CD14-positive monocyte (primary cell): ENCODE measurements at regions of chrX and their contacts with region 1.

Region 1: GRCh38 chrX:120308959-120309872 is 2.0 kb downstream of the TMEM255A start:
- DNase-seq: peak; percentile 42 to 56 (median 54)
- H3K4me3 ChIP-seq: peak overlapping the region; percentile 33 to 71 (median 49)
- H3K4me3 Mint-ChIP-seq: peak overlapping the region; percentile 88 to 100
- H3K27ac ChIP-seq: no peak overlapping the region
- H3K27ac Mint-ChIP-seq: peak overlapping the region in 4 of 7 donors; percentile 0 to 72 (median 20)
- H3K4me1 ChIP-seq: peaks cover 52 to 59% of the 10 kb centered on the region in 2 donors
- H3K4me1 Mint-ChIP-seq: peaks cover 54% of the 10 kb centered on the region
- H3K27me3 ChIP-seq: peaks cover 20 to 53% of the 10 kb centered on the region in 2 donors
- H3K27me3 Mint-ChIP-seq: peaks cover 39 to 56% (median 55%) of the 10 kb centered on the region in 3 donors
- CTCF ChIP-seq: peak; percentile 26

Region 2: GRCh38 chrX:119833905-119834304 is 475.3 kb before region 1 on chrX:
- intact Hi-C with region 1: no loop called
- DNase-seq: no peak
- H3K4me3 ChIP-seq: no peak overlapping the region
- H3K4me3 Mint-ChIP-seq: no peak overlapping the region
- H3K27ac ChIP-seq: no peak overlapping the region
- H3K27ac Mint-ChIP-seq: no peak overlapping the region
- H3K4me1 ChIP-seq: no peaks in the 10 kb centered on the region
- H3K4me1 Mint-ChIP-seq: no peaks in the 10 kb centered on the region
- H3K27me3 ChIP-seq: no peaks in the 10 kb centered on the region
- H3K27me3 Mint-ChIP-seq: peaks cover 0 to 5% (median 3%) of the 10 kb centered on the region in 3 donors
- CTCF ChIP-seq: no peak

Region 3: GRCh38 chrX:120250522-120251271 is 58.5 kb before region 1 on chrX and contains the start of gene ZBTB33:
- intact Hi-C with region 1: loop called (anchors 5 kb)
- DNase-seq: peak; percentile 83 to 87 (median 83)
- H3K4me3 ChIP-seq: peak within 1 kb of the TSS; percentile 55 to 77 (median 76)
- H3K4me3 Mint-ChIP-seq: peak within 1 kb of the TSS; percentile 93 to 96
- H3K27ac ChIP-seq: peak within 1 kb of the TSS; percentile 85 to 96
- H3K27ac Mint-ChIP-seq: peak within 1 kb of the TSS; percentile 92 to 98 (median 96)
- H3K4me1 ChIP-seq: peaks cover 0 to 5% of the 10 kb centered on the region in 2 donors
- H3K4me1 Mint-ChIP-seq: peaks cover 14% of the 10 kb centered on the region
- H3K27me3 ChIP-seq: peaks cover 0 to under 1% of the 10 kb centered on the region in 2 donors
- H3K27me3 Mint-ChIP-seq: peaks cover 0 to 10% (median 0%) of the 10 kb centered on the region in 3 donors
- CTCF ChIP-seq: peak; percentile 64
- polyA plus RNA-seq, gene ZBTB33: 4.7 to 10.6 (median 8.6) TPM

Region 4: GRCh38 chrX:120402369-120402768 is 93.2 kb after region 1 on chrX:
- intact Hi-C with region 1: no loop called
- DNase-seq: no peak
- H3K4me3 ChIP-seq: no peak overlapping the region
- H3K4me3 Mint-ChIP-seq: no peak overlapping the region
- H3K27ac ChIP-seq: no peak overlapping the region
- H3K27ac Mint-ChIP-seq: no peak overlapping the region
- H3K4me1 ChIP-seq: no peaks in the 10 kb centered on the region
- H3K4me1 Mint-ChIP-seq: no peaks in the 10 kb centered on the region
- H3K27me3 ChIP-seq: peaks cover 0 to 2% of the 10 kb centered on the region in 2 donors
- H3K27me3 Mint-ChIP-seq: peaks cover 0 to 2% (median 1%) of the 10 kb centered on the region in 3 donors
- CTCF ChIP-seq: no peak

Region 5: DNA sequence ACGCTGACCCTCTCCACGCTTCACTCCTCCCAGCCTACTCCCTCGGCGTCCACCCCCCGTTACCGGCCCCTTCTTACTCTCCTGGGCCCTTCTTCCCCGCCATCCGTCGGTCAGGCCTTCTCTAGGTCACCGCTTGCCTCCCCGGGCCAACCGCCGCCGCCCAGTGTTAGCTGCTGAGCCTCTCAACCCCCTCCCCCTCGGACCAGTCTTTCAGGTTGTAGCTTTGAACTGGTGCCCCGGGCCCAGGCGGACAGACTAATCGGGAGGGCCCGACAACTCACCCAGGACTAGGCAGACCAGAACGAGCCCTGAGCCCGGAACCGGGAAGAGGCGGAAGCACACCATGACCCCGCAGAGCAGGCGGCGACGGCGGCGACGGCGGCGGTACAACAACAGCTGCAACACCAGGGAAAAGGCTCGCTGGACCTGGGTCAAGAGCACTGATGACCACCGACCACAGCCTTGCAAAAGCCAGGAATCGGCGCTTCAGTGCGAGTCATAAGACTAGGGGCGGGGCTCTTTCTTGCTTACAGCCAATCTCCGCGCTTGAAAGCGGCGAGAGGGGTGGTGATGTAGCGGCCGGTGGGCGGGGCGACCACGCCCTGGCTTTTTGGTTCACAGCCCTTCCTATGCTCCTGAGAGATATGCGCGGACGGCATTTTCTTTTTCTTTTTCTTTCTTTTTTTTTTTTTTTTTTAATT is 159.8 kb after region 1 on chrX and contains the start of gene LAMP2:
- intact Hi-C with region 1: loop called in 1 of 2 experiments (anchors 10 kb)
- DNase-seq: peak; percentile 87 to 90 (median 90)
- H3K4me3 ChIP-seq: peak within 1 kb of the TSS; percentile 47 to 89 (median 88)
- H3K4me3 Mint-ChIP-seq: peak within 1 kb of the TSS; percentile 95 to 97
- H3K27ac ChIP-seq: peak within 1 kb of the TSS; percentile 91 to 97
- H3K27ac Mint-ChIP-seq: peak within 1 kb of the TSS; percentile 93 to 99 (median 95)
- H3K4me1 ChIP-seq: peaks cover 30 to 34% of the 10 kb centered on the region in 2 donors
- H3K4me1 Mint-ChIP-seq: peaks cover 32% of the 10 kb centered on the region
- H3K27me3 ChIP-seq: no peaks in the 10 kb centered on the region
- H3K27me3 Mint-ChIP-seq: peaks cover 0 to 6% (median 0%) of the 10 kb centered on the region in 3 donors
- CTCF ChIP-seq: no peak
- polyA plus RNA-seq, gene LAMP2: 75.8 to 381 (median 330) TPM